Endothelial cell of umbilical vein (primary cell): ENCODE measurements at regions of chr1 and their contacts with region 1.

Region 1: GRCh38 chr1:26417111-26417759 is 6.6 kb downstream of the LIN28A start:
- DNase-seq: peak; percentile 57
- H3K4me3 ChIP-seq: no peak overlapping the region
- H3K27ac ChIP-seq: no peak overlapping the region
- H3K4me1 ChIP-seq: no peaks in the 10 kb centered on the region
- H3K27me3 ChIP-seq: peaks cover 39 to 40% of the 10 kb centered on the region in 2 experiments
- CTCF ChIP-seq: peak; percentile 82 to 99
- POLR2A ChIP-seq: no peak

Region 2: GRCh38 chr1:26233903-26234643 is 183.2 kb before region 1 on chr1 and contains the start of gene CEP85:
- CTCF ChIA-PET with region 1: interaction called, 10 read pairs
- POLR2A ChIA-PET with region 1: no interaction called
- dilution Hi-C with region 1: no loop called
- intact Hi-C with region 1: no loop called
- DNase-seq: peak; percentile 98
- H3K4me3 ChIP-seq: peak within 1 kb of the TSS; percentile 35 to 78 (median 65)
- H3K27ac ChIP-seq: peak within 1 kb of the TSS; percentile 9
- H3K4me1 ChIP-seq: peaks cover 12% of the 10 kb centered on the region
- H3K27me3 ChIP-seq: no peaks in the 10 kb centered on the region
- CTCF ChIP-seq: peak; percentile 87 to 92
- POLR2A ChIP-seq: peak; percentile 81
- total RNA-seq, gene CEP85: 16.2 and 17.8 TPM in 2 replicates

Region 3: GRCh38 chr1:26321315-26322041 is 95.8 kb before region 1 on chr1:
- CTCF ChIA-PET with region 1: interaction called, 10 read pairs
- POLR2A ChIA-PET with region 1: no interaction called
- dilution Hi-C with region 1: no loop called
- intact Hi-C with region 1: no loop called
- DNase-seq: peak; percentile 81
- H3K4me3 ChIP-seq: no peak overlapping the region
- H3K27ac ChIP-seq: no peak overlapping the region
- H3K4me1 ChIP-seq: no peaks in the 10 kb centered on the region
- H3K27me3 ChIP-seq: no peaks in the 10 kb centered on the region
- CTCF ChIP-seq: peak; percentile 82 to 92
- POLR2A ChIP-seq: no peak

Region 4: DNA sequence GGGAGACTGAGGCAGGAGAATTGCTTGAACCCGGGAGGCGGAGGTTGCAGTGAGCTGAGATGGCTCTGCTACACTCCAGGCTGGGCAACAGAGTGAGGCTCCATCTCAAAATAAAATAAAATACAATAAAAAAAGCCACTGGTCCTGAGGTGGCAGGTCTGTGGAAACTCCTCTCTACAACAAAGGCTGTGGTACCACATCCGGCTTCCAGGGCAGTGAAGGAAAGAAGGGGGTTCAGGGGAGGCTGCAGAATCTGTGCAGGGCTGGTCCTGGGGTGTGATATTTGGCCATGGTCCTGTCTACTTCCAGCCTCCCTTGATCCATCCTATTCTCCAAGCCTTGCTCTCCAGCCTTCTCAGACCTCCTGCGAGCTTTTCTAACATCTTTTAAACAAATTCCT is 44.0 kb before region 1 on chr1:
- CTCF ChIA-PET with region 1: interaction called, 13 read pairs
- POLR2A ChIA-PET with region 1: no interaction called
- dilution Hi-C with region 1: no loop called
- intact Hi-C with region 1: no loop called
- DNase-seq: no peak
- H3K4me3 ChIP-seq: no peak overlapping the region
- H3K27ac ChIP-seq: no peak overlapping the region
- H3K4me1 ChIP-seq: peaks cover 4% of the 10 kb centered on the region
- H3K27me3 ChIP-seq: peaks cover 0 to 2% of the 10 kb centered on the region in 2 experiments
- CTCF ChIP-seq: no peak
- POLR2A ChIP-seq: no peak

Region 5: GRCh38 chr1:26391450-26391849 is 25.8 kb before region 1 on chr1:
- CTCF ChIA-PET with region 1: interaction called, 15 read pairs
- POLR2A ChIA-PET with region 1: no interaction called
- dilution Hi-C with region 1: no loop called
- intact Hi-C with region 1: no loop called
- DNase-seq: peak; percentile 29
- H3K4me3 ChIP-seq: no peak overlapping the region
- H3K27ac ChIP-seq: no peak overlapping the region
- H3K4me1 ChIP-seq: no peaks in the 10 kb centered on the region
- H3K27me3 ChIP-seq: peaks cover 0 to 3% of the 10 kb centered on the region in 2 experiments
- CTCF ChIP-seq: peak; percentile 50 to 70
- POLR2A ChIP-seq: no peak

Region 6: DNA sequence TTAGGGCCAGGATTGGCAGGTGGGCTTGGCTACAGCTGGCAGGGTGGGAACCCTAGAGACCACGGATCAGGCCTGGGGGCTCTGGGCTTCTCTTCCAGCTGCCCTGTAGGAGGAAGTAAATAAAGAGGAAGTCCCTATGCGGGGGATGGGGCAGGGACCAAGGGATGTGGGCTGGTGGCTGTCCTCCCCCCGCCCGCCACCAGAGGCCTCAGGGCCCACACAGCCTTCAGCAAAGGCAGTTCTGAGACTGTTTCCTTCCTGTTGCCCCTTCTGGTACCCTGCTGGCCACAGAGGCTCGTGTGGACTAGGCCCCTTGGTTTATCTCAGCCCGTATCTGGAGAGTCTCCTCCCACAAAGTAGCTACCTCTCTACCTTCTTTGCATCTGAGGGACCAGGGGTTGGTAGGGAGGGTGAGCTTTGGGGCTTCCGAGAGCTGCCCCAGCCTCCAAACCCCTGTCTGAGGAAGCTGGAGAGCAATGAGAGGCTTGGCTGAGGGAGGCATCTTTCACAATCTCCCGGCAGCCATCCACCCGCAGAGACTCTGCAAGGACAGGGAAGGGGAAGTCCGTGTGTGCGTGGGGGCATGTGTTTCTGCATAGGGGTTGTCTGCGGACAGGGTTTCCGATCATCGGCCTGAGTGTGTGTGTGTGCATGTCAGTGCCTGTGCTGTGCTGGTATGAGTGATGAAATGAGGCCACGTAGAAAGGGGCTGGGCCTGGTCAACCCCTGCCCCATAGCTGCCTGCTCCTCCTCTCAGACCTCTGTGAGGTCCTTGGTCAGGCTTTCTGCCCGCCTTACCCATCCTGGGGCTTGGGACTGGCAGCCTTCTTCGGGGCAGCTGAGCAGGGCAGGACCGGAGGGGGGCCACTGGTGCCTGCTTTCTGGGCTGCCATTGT is 124.8 kb after region 1 on chr1:
- CTCF ChIA-PET with region 1: no interaction called
- POLR2A ChIA-PET with region 1: no interaction called
- dilution Hi-C with region 1: no loop called
- intact Hi-C with region 1: no loop called
- DNase-seq: peak; percentile 14
- H3K4me3 ChIP-seq: no peak overlapping the region
- H3K27ac ChIP-seq: no peak overlapping the region
- H3K4me1 ChIP-seq: peaks cover 2% of the 10 kb centered on the region
- H3K27me3 ChIP-seq: no peaks in the 10 kb centered on the region
- CTCF ChIP-seq: peak; percentile 22 to 42
- POLR2A ChIP-seq: no peak